PC-9 (cell line): ENCODE measurements at regions of chr20 and their contacts with region 1.

Region 1: GRCh38 chr20:57089691-57090150 is 176.7 kb downstream of the BMP7 start:
- DNase-seq: peak; percentile 57 to 78
- H3K4me3 ChIP-seq: no peak overlapping the region
- H3K27ac ChIP-seq: no peak overlapping the region
- H3K4me1 ChIP-seq: no peaks in the 10 kb centered on the region
- H3K27me3 ChIP-seq: peaks cover 17% of the 10 kb centered on the region; the same call in 1 of the 2 replicates
- CTCF ChIP-seq: peak; percentile 99

Region 2: GRCh38 chr20:56995576-56996075 is 94.1 kb before region 1 on chr20:
- CTCF ChIA-PET with region 1: no interaction called
- POLR2A ChIA-PET with region 1: no interaction called
- intact Hi-C with region 1: no loop called
- DNase-seq: peak; percentile 47 to 55
- H3K4me3 ChIP-seq: no peak overlapping the region
- H3K27ac ChIP-seq: no peak overlapping the region
- H3K4me1 ChIP-seq: peaks cover 11% of the 10 kb centered on the region
- H3K27me3 ChIP-seq: no peaks in the 10 kb centered on the region
- CTCF ChIP-seq: peak; percentile 77

Region 3: DNA sequence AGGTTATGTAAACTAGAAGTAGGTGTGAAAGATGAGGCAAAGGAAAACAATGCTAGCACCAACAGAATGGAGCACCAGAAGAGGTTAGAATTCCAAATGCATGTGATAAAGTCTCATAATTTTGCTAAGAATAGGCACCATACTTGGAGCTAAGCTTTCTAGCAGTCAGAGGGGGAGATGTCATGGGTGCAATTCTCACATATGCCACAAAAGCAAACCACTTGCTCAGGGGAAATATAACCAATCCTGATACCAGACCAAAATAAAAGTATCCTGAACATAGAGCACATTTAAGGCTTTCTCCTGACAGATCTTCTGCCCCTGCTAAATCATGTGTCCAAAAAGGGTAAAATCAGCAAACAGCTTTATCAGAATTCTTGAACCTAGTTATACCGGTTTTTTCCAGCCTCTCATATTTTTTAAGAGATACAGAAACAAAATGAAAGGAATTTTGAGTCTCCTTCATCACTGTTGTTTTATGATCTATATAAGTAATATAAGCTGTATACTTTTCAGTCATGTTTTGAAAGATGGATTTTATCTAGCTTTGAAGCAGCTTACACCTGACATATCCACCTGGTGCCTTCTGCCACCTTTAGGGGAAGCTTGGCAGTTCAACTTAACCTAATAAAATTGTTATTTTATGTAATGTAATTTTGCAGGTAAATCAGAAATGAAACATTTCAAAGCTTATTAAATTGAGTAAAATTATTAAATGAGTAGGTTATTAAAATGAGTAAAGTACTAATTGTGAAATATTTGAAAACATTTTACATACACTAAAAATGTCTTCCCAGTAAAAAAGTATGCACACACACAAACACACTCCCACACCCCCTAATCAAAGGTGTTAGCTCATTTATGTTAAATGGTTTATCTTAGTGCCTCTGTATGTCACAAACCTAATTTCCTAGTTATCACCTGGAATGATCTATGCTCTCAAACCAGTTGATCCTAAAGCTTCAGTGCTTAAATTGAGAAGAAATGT is 242.7 kb after region 1 on chr20:
- CTCF ChIA-PET with region 1: interaction called, 19 read pairs
- POLR2A ChIA-PET with region 1: no interaction called
- intact Hi-C with region 1: loop called (anchors 1 kb)
- DNase-seq: peak in 1 of 2 experiments; percentile 44
- H3K4me3 ChIP-seq: no peak overlapping the region
- H3K27ac ChIP-seq: no peak overlapping the region
- H3K4me1 ChIP-seq: peaks cover 9% of the 10 kb centered on the region
- H3K27me3 ChIP-seq: peaks cover 4% of the 10 kb centered on the region; the same call in 1 of the 2 replicates
- CTCF ChIP-seq: peak; percentile 81

Region 4: GRCh38 chr20:57346477-57346876 is 256.8 kb after region 1 on chr20:
- CTCF ChIA-PET with region 1: interaction called, 3 read pairs
- POLR2A ChIA-PET with region 1: no interaction called
- intact Hi-C with region 1: loop called (anchors 1 kb)
- DNase-seq: peak; percentile 70 to 73
- H3K4me3 ChIP-seq: no peak overlapping the region
- H3K27ac ChIP-seq: no peak overlapping the region
- H3K4me1 ChIP-seq: peaks cover 10% of the 10 kb centered on the region; the same call in 1 of the 2 replicates
- H3K27me3 ChIP-seq: no peaks in the 10 kb centered on the region
- CTCF ChIP-seq: peak; percentile 93

Region 5: DNA sequence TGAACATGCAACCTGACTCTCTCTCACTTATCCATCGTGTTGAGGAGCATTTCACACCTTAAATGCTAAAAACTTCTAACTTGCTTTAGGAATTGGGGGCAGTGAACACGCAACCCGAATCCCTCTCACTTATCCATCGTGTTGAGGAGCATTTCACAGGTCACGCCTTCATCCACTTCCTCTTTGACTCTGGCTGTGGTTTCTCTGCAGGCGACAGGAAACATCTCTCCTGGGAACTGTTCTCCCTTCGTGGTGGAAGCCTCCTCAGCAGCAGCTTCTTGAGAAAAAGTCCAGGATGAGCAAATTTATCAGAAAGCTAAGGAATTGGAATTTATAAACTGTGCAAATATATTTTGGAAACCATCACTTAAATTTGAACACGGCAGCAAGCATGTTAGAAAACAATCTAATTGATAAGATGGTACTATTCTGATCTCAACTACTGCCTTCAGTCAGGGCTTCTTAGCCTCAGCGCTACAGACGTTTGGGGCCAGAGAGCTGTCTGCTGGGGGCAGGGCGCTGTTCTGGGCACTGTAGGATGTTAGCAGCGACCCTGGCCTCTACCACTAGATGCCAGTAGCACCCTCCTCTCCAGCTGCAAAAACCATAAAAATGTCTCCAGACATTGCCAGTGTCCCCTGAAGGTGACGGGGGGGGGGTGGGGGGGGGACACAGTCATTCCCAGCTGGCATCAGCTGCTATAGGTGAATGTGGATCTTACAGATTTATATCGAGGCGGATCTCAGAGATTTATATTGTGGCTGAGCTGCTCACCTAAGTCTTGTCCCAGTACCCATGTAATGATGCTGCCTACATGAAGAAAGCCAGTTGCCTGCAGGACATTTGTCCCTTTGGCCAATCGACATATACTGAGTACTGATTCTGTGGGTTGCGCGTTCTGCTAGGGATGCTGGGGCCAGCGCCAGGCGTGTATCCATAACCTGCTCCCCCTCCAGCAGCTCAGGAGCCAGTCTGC is 409.0 kb after region 1 on chr20:
- CTCF ChIA-PET with region 1: no interaction called
- POLR2A ChIA-PET with region 1: no interaction called
- intact Hi-C with region 1: loop called (anchors 5 kb)
- DNase-seq: peak in 1 of 2 experiments; percentile 27
- H3K4me3 ChIP-seq: no peak overlapping the region
- H3K27ac ChIP-seq: no peak overlapping the region
- H3K4me1 ChIP-seq: peaks cover 12% of the 10 kb centered on the region
- H3K27me3 ChIP-seq: no peaks in the 10 kb centered on the region
- CTCF ChIP-seq: peak; percentile 61

Region 6: GRCh38 chr20:57514273-57514751 is 424.6 kb after region 1 on chr20:
- CTCF ChIA-PET with region 1: no interaction called
- POLR2A ChIA-PET with region 1: no interaction called
- intact Hi-C with region 1: loop called (anchors 5 kb)
- DNase-seq: peak; percentile 56
- H3K4me3 ChIP-seq: no peak overlapping the region
- H3K27ac ChIP-seq: no peak overlapping the region
- H3K4me1 ChIP-seq: no peaks in the 10 kb centered on the region
- H3K27me3 ChIP-seq: peaks cover 9% of the 10 kb centered on the region; the same call in 1 of the 2 replicates
- CTCF ChIP-seq: peak; percentile 92

Region 7: DNA sequence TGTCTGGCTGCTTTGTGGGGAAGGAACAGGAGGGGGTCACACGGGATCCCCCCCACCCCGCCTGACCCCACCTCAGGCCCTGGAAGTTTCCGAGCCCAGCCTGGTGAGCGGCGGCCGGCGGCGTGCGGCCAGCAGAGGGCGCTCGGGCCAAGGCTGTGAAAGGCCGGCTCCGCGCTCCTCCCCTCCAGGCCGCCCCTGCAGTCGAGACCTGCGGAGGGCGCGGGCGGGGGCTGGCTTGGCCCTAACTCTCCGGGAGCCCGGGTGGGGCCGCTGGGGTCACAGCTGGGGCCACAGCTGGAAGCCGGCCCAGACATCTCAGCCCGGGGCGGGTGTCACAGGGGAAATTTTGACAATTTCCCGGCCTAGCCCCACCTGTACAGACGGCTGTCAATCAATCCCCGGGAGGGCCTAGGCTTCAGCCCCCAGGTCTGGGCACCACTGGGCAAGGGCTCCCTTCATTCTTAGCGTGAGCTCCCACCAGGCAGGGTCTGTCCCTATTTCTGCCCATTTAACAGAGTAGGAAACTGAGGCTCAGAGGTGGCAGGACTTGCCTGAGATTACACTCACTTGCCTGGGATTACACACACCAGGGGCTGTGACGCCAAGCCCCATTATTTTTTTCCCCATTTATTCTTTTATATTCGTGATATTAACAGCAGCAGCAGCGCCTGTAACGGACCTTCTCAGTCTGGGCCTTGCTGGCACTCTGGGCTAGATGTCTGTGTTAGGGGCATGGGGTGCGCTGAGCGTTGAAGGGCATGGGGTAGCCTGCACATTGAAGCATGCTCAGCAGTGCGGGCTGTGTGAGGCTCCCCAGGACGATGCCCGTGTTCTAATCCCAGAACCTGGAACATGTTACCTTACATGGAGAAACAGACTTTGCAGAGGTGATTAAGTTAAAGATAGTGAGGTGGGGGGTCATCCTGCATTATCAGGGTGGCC is 507.5 kb after region 1 on chr20:
- CTCF ChIA-PET with region 1: no interaction called
- POLR2A ChIA-PET with region 1: no interaction called
- intact Hi-C with region 1: loop called (anchors 10 kb)
- DNase-seq: peak in 1 of 2 experiments; percentile 73
- H3K4me3 ChIP-seq: peak overlapping the region; percentile 43; the same call in 1 of the 2 replicates
- H3K27ac ChIP-seq: no peak overlapping the region
- H3K4me1 ChIP-seq: peaks cover 4% of the 10 kb centered on the region; the same call in 1 of the 2 replicates
- H3K27me3 ChIP-seq: peaks cover 6% of the 10 kb centered on the region; the same call in 1 of the 2 replicates
- CTCF ChIP-seq: peak; percentile 97

Region 8: GRCh38 chr20:58219301-58219700 is 1129.6 kb after region 1 on chr20:
- CTCF ChIA-PET with region 1: no interaction called
- POLR2A ChIA-PET with region 1: no interaction called
- intact Hi-C with region 1: no loop called
- DNase-seq: peak; percentile 26 to 75
- H3K4me3 ChIP-seq: peak overlapping the region; percentile 24; the same call in 1 of the 2 replicates
- H3K27ac ChIP-seq: no peak overlapping the region
- H3K4me1 ChIP-seq: 0 out of 2 replicates have a peak, but pooled peaks cover 6% of the 10 kb centered on the region
- H3K27me3 ChIP-seq: no peaks in the 10 kb centered on the region
- CTCF ChIP-seq: peak; percentile 49; the same call in 1 of the 2 replicates